ENCODE measurements at regions of chr5 and their contacts with region 1.

Region 1: GRCh38 chr5:62143268-62144229 is 162.5 kb upstream of the KIF2A start:
- DNase-seq: no peak
- H3K4me3 ChIP-seq: no peak overlapping the region
- H3K27ac ChIP-seq: no peak overlapping the region
- H3K27me3 ChIP-seq: peaks cover 3% of the 10 kb centered on the region
- CTCF ChIP-seq: peak; percentile 54

Region 2: DNA sequence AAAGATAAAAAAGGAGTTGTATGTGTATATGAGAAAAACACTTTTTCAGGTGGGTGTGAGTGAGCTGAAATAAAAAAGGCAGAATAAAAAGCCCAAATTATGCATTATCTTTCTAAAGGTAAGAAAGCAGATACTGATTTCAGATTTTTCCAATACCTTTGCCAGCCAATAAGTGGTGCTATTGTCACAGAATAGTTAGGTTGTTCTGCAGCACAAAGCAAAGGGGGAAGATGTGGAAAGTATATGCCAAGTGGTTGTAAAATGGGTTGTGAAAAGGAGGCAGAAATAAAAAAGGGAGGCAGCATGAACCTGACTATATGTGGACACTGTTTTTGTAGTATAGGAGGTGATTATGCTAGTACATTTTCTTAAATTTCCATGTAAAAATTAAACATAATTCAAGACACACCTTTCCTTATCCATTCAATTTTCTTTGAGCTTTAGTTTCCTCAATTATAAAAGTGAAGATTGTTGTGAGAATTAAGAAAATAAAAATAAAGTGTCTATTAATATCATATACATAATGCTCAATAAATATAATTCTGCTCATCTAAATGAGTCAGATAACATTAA is 1088.0 kb before region 1 on chr5:
- CTCF ChIA-PET with region 1: interaction called, 17 read pairs
- POLR2A ChIA-PET with region 1: no interaction called
- DNase-seq: no peak
- H3K4me3 ChIP-seq: no peak overlapping the region
- H3K27ac ChIP-seq: no peak overlapping the region
- H3K27me3 ChIP-seq: no peaks in the 10 kb centered on the region
- CTCF ChIP-seq: peak; percentile 81

Region 3: GRCh38 chr5:62030326-62030725 is 113.2 kb before region 1 on chr5:
- CTCF ChIA-PET with region 1: no interaction called
- POLR2A ChIA-PET with region 1: no interaction called
- DNase-seq: no peak
- H3K4me3 ChIP-seq: no peak overlapping the region
- H3K27ac ChIP-seq: no peak overlapping the region
- H3K27me3 ChIP-seq: no peaks in the 10 kb centered on the region
- CTCF ChIP-seq: no peak

Region 4: DNA sequence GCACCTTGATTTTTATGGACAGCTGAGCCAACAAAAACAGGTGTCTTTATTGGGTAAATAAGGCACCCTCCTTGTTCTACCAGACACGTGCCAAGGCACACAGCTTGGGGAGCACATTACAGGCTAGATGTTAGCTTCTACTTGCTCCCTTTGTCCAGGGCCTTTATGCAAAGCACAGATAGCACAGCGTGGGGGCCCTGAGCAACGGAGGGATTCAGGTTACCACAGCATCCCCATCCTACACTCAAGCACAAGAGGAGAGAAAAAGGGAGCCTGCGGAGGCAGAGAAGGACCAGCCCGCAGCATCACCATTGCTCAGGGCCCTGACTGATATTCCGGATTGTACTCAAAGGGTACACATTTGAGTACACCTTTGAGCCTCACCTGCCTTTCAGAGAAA is 19.3 kb before region 1 on chr5:
- CTCF ChIA-PET with region 1: interaction called, 13 read pairs
- POLR2A ChIA-PET with region 1: no interaction called
- DNase-seq: no peak
- H3K4me3 ChIP-seq: no peak overlapping the region
- H3K27ac ChIP-seq: no peak overlapping the region
- H3K27me3 ChIP-seq: no peaks in the 10 kb centered on the region
- CTCF ChIP-seq: no peak

Region 5: DNA sequence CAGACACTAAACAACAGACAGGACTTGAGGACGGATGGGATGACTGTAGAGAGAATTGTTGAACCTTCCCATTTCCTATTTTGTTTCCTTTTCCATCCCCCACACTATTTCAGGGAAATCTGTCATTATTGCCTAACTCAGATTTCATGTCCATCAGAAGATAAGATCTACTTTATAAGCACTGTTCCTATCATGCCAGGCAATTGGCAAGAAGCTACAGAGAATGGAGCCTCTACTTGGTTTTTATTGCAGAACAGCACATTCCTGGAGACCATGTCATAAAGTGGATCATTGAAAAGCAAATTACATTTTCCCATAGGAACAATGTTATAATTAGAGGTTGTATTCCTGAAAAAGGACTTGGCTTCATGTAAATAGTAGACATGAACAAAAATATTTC is 11.3 kb before region 1 on chr5:
- CTCF ChIA-PET with region 1: interaction called, 15 read pairs
- POLR2A ChIA-PET with region 1: no interaction called
- DNase-seq: no peak
- H3K4me3 ChIP-seq: no peak overlapping the region
- H3K27ac ChIP-seq: no peak overlapping the region
- H3K27me3 ChIP-seq: no peaks in the 10 kb centered on the region
- CTCF ChIP-seq: no peak